WTC11 (cell line): ENCODE measurements at regions of chr14 and their contacts with region 1.

Region 1: DNA sequence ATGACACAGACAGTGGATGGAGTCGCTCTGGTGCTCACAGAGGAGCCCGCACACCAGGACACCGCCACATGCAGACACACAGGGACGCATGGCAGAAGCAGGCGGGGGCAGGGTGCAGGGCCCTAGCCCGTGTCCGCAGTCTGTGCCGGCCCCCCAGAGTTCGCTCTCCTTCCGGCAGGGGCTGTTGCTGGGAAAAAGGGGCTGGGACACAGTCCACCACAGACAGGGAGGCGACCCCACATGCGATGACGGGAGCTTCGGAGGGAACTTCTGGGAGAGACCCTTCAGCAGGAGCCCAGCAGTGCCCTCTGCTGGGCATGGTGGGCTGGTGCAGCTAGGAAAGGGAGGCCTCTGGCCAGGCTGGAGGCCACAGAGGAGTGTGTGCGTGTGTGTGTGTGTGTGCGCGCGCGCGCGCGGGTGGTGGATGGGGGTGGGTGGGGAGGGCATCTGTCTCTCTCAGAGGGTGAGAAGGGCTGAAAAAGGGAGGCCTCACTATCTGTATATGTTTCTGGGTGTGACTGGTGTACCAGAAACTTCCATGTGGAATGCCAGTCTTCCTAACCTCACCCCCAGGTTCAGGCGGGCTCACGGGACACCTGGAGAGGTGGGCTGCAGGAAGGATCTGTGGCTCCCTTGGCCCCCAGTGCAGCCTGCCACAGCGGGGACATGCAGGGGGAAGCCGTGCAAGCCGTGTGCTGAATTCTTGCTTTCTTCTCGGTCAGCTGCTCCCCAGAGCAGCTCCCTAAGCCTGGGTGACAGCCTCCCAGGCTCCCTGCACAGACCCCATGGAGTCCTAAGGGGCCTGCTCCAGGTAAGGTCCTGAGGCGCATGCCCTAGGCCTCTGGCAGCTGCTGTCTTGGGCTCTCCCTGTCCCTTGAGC is 60.7 kb downstream of the PLEKHG3 start:
- DNase-seq: peak; percentile 86
- ATAC-seq: peak; percentile 54
- H3K4me3 Mint-ChIP-seq: peak overlapping the region; percentile 40
- H3K27ac Mint-ChIP-seq: no peak overlapping the region
- H3K4me1 Mint-ChIP-seq: peaks cover 48% of the 10 kb centered on the region
- H3K27me3 Mint-ChIP-seq: peaks cover 18% of the 10 kb centered on the region
- CTCF ChIP-seq: peak; percentile 95

Region 2: DNA sequence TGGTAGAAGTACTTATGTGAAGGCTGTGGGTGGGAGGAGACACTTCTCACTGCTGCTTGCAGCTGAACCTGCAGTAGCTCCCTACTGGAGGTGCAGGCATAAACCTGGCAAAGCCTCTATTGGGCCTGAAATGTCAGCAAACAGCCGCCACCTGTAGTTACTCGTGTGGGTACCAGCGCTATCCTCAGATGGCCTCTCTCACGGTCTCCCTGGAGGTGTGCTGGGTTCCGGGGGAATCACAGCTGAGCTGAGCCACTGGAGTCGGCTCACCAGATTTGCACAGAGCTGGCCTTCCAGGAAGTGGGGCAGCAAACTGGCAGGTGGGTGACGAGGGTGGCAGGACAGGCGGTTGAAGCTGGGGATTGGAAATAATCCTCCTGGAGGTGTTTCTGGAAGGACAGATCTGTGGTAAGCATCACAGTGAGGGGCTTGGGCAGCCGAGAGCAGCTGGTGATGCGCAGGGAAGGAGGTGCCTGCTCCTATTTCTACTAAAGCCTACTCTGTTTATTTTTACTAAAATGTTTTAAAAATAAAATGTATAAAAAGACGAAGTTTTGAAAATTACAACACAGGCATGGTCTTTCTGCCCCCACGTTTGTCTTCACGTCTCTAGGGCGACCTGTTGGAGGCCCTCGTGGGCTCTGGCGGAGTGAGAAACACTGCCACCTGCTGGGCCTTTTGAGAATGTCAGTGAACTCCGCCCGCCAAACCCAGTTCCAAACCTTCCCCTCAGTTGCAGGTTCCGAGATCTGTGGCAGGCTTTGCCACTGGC is 128.5 kb before region 1 on chr14:
- CTCF ChIA-PET with region 1: interaction called, 14 read pairs
- POLR2A ChIA-PET with region 1: no interaction called
- DNase-seq: peak; percentile 82
- ATAC-seq: peak; percentile 87
- H3K4me3 Mint-ChIP-seq: no peak overlapping the region
- H3K27ac Mint-ChIP-seq: no peak overlapping the region
- H3K4me1 Mint-ChIP-seq: peaks cover 24% of the 10 kb centered on the region
- H3K27me3 Mint-ChIP-seq: no peaks in the 10 kb centered on the region
- CTCF ChIP-seq: peak; percentile 82

Region 3: DNA sequence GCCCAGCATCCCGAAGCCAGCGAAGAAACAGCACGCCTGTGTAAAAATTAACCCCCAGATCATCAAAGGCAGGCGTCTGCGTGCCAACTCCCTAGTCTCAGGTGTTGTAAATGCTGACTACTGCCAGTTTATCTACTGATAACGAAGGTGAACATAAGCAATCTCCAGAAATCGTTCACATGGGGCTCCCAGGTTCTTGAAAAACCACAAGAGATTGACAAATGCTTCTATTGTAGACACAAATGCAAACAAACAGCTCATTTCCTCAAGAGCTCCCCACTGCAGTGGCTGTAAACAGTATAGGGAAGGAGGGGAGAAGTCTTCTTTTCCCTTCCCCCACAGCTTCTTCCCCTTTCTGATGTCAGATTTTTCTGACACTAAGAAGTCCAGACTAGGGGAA is 66.0 kb before region 1 on chr14:
- CTCF ChIA-PET with region 1: interaction called, 17 read pairs
- POLR2A ChIA-PET with region 1: no interaction called
- DNase-seq: no peak
- ATAC-seq: 0 out of 2 replicates have a peak, but pooled peaks have one; percentile 1
- H3K4me3 Mint-ChIP-seq: no peak overlapping the region
- H3K27ac Mint-ChIP-seq: peak overlapping the region; percentile 61; the same call in 1 of the 2 replicates
- H3K4me1 Mint-ChIP-seq: peaks cover 64% of the 10 kb centered on the region
- H3K27me3 Mint-ChIP-seq: no peaks in the 10 kb centered on the region
- CTCF ChIP-seq: no peak

Region 4: GRCh38 chr14:64736271-64737122 is 28.4 kb before region 1 on chr14:
- CTCF ChIA-PET with region 1: interaction called, 10 read pairs
- POLR2A ChIA-PET with region 1: no interaction called
- DNase-seq: peak; percentile 46
- ATAC-seq: peak; percentile 84
- H3K4me3 Mint-ChIP-seq: no peak overlapping the region
- H3K27ac Mint-ChIP-seq: no peak overlapping the region
- H3K4me1 Mint-ChIP-seq: peaks cover 11% of the 10 kb centered on the region
- H3K27me3 Mint-ChIP-seq: no peaks in the 10 kb centered on the region
- CTCF ChIP-seq: no peak

Region 5: DNA sequence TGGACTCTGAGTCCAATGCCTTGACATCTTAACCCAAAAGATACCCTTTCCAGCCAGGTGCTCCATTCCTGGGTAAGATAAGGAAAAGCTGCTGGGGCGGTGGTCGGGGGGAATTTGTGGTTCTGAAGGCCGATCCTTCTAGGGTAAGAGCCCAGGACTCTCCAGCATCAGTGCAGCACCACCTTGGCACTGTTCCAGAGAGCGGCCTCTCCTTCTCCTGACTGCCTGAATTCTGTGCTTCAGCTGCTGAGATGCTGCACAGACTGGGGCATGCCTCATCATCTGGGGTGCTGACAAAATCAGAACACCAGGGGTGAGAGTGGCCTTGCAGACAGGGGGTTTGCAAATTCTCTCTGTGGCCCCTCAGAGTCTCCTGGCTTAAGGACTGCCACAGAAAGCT is 27.4 kb after region 1 on chr14:
- CTCF ChIA-PET with region 1: interaction called, 10 read pairs
- POLR2A ChIA-PET with region 1: no interaction called
- DNase-seq: no peak
- ATAC-seq: no peak
- H3K4me3 Mint-ChIP-seq: no peak overlapping the region
- H3K27ac Mint-ChIP-seq: no peak overlapping the region
- H3K4me1 Mint-ChIP-seq: peaks cover 14% of the 10 kb centered on the region
- H3K27me3 Mint-ChIP-seq: no peaks in the 10 kb centered on the region; the same call in 1 of the 2 replicates
- CTCF ChIP-seq: no peak

Region 6: GRCh38 chr14:64891839-64892375 is 127.0 kb after region 1 on chr14:
- CTCF ChIA-PET with region 1: interaction called, 21 read pairs
- POLR2A ChIA-PET with region 1: no interaction called
- DNase-seq: no peak
- ATAC-seq: peak; percentile 78
- H3K4me3 Mint-ChIP-seq: no peak overlapping the region
- H3K27ac Mint-ChIP-seq: no peak overlapping the region
- H3K4me1 Mint-ChIP-seq: no peaks in the 10 kb centered on the region
- H3K27me3 Mint-ChIP-seq: peaks cover 3% of the 10 kb centered on the region; the same call in 1 of the 2 replicates
- CTCF ChIP-seq: peak; percentile 29; the same call in 1 of the 2 replicates

Region 7: GRCh38 chr14:65184032-65184764 is 419.3 kb after region 1 on chr14:
- CTCF ChIA-PET with region 1: no interaction called
- POLR2A ChIA-PET with region 1: no interaction called
- DNase-seq: no peak
- ATAC-seq: no peak
- H3K4me3 Mint-ChIP-seq: no peak overlapping the region
- H3K27ac Mint-ChIP-seq: no peak overlapping the region
- H3K4me1 Mint-ChIP-seq: peaks cover 54% of the 10 kb centered on the region
- H3K27me3 Mint-ChIP-seq: peaks cover 35% of the 10 kb centered on the region
- CTCF ChIP-seq: no peak